K562 (cell line): ENCODE measurements at regions of chr6 and their contacts with region 1.

Region 1: GRCh38 chr6:73329201-73329600 is 24.9 kb downstream of the DPPA5 start:
- DNase-seq: no peak
- ATAC-seq: no peak
- H3K4me3 ChIP-seq: no peak overlapping the region
- H3K27ac ChIP-seq: no peak overlapping the region
- H3K4me1 ChIP-seq: no peaks in the 10 kb centered on the region; a peak in 1 of 5 replicates
- H3K27me3 ChIP-seq: peaks cover 3 to 9% of the 10 kb centered on the region in 2 experiments; a peak in 4 of 5 replicates
- CTCF ChIP-seq: no peak
- EP300 ChIP-seq: no peak
- POLR2A ChIP-seq: no peak
- RAD21 ChIP-seq: no peak

Region 2: DNA sequence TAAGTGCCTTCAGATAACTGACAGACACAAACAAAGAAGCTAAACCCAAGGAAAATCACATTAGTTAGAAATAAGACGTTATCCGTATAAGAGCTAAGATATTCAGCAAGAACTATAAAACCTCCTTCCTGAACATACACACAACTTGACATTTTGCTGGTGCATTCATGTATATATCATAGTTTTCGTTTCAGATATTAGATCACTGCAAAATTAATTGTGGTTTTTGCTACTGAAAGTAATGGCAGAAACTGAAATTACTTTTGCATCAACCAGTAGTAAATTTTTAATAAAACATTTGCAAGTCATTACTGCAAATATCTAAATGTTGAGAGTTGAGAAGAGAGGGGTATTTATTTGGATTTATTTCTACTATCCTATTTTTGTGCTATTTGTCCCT is 733.4 kb before region 1 on chr6:
- CTCF ChIA-PET with region 1: no interaction called
- POLR2A ChIA-PET with region 1: no interaction called
- in situ Hi-C with region 1: loop called (anchors 10 kb)
- intact Hi-C with region 1: no loop called
- DNase-seq: no peak
- ATAC-seq: no peak
- H3K4me3 ChIP-seq: no peak overlapping the region
- H3K27ac ChIP-seq: no peak overlapping the region
- H3K4me1 ChIP-seq: no peaks in the 10 kb centered on the region; a peak in 1 of 5 replicates
- H3K27me3 ChIP-seq: no peaks in the 10 kb centered on the region
- CTCF ChIP-seq: no peak
- EP300 ChIP-seq: no peak
- POLR2A ChIP-seq: no peak
- RAD21 ChIP-seq: no peak

Region 3: DNA sequence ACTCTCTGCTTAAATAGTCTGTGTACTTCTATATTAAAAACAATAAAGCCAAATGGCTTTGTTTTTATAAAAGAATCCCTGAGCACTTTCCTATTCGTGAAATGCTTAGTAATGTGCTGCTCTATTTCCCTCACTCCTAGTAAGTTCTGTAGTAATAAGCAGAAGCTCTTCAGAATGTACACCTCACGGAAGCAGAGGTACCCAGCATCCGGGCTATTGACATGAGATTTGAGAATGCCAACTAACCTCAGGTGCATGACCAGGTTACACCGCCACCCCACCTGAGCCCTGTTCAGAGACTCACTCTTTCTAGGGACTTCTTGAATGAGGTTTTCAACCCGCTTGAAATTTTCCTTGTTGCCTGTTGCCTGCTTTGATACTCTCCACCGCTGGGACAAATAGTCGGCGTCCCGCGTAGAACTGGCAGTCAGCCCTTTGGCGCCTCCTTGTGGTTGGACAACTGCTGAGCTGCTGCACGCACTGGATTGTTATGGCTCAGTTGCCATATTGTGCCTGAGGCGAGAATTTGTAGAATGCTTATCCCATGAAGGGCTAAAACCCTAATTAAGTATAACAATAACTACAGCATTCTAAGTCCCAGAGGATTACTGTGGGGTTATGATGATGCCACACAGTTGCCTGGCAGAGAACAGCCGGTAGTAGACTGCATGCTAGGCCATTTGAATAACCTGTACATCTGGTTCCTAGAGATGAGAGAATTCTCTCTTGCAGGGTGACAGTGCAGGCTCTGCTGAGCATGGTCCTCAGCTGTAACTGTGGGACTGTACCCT is 199.4 kb before region 1 on chr6:
- CTCF ChIA-PET with region 1: no interaction called
- POLR2A ChIA-PET with region 1: no interaction called
- in situ Hi-C with region 1: no loop called
- intact Hi-C with region 1: loop called (anchors 1 kb)
- DNase-seq: peak; percentile 66 to 86 (median 70)
- ATAC-seq: peak; percentile 99
- H3K4me3 ChIP-seq: no peak overlapping the region
- H3K27ac ChIP-seq: no peak overlapping the region
- H3K4me1 ChIP-seq: no peaks in the 10 kb centered on the region; a peak in 1 of 5 replicates
- H3K27me3 ChIP-seq: no peaks in the 10 kb centered on the region
- CTCF ChIP-seq: peak; percentile 96 to 98 (median 98)
- EP300 ChIP-seq: no peak
- POLR2A ChIP-seq: no peak
- RAD21 ChIP-seq: peak; percentile 92 to 94

Region 4: DNA sequence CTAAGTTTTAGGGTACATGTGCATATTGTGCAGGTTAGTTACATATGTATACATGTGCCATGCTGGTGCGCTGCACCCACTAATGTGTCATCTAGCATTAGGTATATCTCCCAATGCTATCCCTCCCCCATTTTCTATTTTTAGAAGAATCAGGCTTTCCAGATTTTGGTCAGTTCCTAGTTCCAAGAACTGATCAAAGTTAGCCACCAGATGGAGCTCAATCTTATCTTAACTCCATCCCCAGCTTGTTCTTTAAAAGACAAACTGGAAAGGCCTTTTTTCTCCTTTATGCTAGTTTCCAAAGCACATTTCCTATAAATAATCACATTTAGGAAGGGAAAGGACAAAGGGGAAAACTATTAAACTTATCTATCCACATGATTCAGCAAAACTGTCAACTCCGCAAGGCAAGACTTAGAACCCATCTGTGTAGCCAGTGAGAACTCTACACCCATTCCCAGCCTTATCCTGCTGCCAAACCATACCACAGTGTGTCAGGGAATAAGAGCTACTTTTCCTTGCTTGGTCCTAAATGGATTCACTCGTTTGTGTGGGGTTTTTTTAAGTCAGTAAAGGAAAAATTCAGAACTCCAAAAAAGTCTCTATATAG is 43.4 kb before region 1 on chr6:
- CTCF ChIA-PET with region 1: interaction called, 19 read pairs
- POLR2A ChIA-PET with region 1: no interaction called
- in situ Hi-C with region 1: loop called (anchors 5 kb)
- intact Hi-C with region 1: loop called (anchors 1 kb)
- DNase-seq: peak; percentile 56 to 75 (median 65)
- ATAC-seq: peak; percentile 88
- H3K4me3 ChIP-seq: no peak overlapping the region
- H3K27ac ChIP-seq: no peak overlapping the region
- H3K4me1 ChIP-seq: peaks cover 3 to 10% of the 10 kb centered on the region in 2 experiments; a peak in 4 of 5 replicates
- H3K27me3 ChIP-seq: no peaks in the 10 kb centered on the region
- CTCF ChIP-seq: peak in 2 of 3 experiments; percentile 53 to 58; a peak in 5 of 6 replicates
- EP300 ChIP-seq: peak; percentile 46; the same call in 1 of the 2 replicates
- POLR2A ChIP-seq: no peak
- RAD21 ChIP-seq: peak; percentile 70 to 75

Region 5: GRCh38 chr6:73695619-73696421 is 366.6 kb after region 1 on chr6 and contains the start of gene CD109:
- CTCF ChIA-PET with region 1: no interaction called
- POLR2A ChIA-PET with region 1: no interaction called
- in situ Hi-C with region 1: no loop called
- intact Hi-C with region 1: no loop called
- DNase-seq: no peak
- ATAC-seq: peak; percentile 44
- H3K4me3 ChIP-seq: peak within 1 kb of the TSS; percentile 11; the same call in 1 of the 2 replicates
- H3K27ac ChIP-seq: no peak within 1 kb of the TSS
- H3K4me1 ChIP-seq: peaks cover 0 to 9% of the 10 kb centered on the region in 2 experiments; a peak in 1 of 5 replicates
- H3K27me3 ChIP-seq: peaks cover 9 to 39% of the 10 kb centered on the region in 2 experiments; a peak in 3 of 5 replicates
- CTCF ChIP-seq: no peak
- EP300 ChIP-seq: no peak
- POLR2A ChIP-seq: no peak
- RAD21 ChIP-seq: no peak
- polyA plus RNA-seq, gene CD109: under 0.01 to 0.04 TPM